Heart right ventricle (tissue), 16 donors: ENCODE measurements at regions of chr14 and their contacts with region 1.

Region 1: DNA sequence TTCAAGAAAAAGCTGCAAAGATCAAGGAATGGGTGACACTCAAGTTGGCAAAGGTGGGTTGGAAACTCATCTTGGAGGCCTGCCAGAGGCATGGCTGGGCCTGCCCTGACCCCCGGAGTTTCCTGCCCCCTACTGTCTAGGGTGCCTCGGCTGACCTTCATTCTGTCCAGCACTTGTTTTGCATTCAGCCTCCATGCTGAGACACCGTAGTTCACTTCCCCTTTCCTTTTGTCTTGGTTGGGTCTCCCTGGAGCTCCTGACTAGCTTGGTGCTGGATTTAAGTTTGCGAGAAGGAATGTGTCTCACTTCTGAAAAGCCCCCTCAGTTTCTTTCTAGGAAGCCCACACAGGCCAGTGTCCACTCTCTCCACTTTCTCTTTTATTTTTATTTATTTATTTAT is 26.5 kb downstream of the PLEKHH1 start:
- DNase-seq: no peak
- ATAC-seq: no peak
- H3K4me3 ChIP-seq: no peak overlapping the region
- H3K27ac ChIP-seq: no peak overlapping the region
- H3K4me1 ChIP-seq: no peaks in the 10 kb centered on the region
- H3K27me3 ChIP-seq: no peaks in the 10 kb centered on the region
- CTCF ChIP-seq: no peak

Region 2: GRCh38 chr14:67435615-67436346 is 123.9 kb before region 1 on chr14:
- intact Hi-C with region 1: loop called in 1 of 10 experiments (anchors 5 kb)
- DNase-seq: no peak
- ATAC-seq: peak in 1 of 8 donors; percentile 47
- H3K4me3 ChIP-seq: no peak overlapping the region
- H3K27ac ChIP-seq: no peak overlapping the region
- H3K4me1 ChIP-seq: peaks cover 0 to 5% (median 0%) of the 10 kb centered on the region in 9 donors
- H3K27me3 ChIP-seq: peaks cover 0 to 4% (median 3%) of the 10 kb centered on the region in 7 donors
- CTCF ChIP-seq: no peak

Region 3: GRCh38 chr14:67963960-67964744 is 404.5 kb after region 1 on chr14:
- intact Hi-C with region 1: no loop called
- DNase-seq: no peak
- ATAC-seq: peak in 2 of 8 donors; percentile 39 to 58
- H3K4me3 ChIP-seq: peak overlapping the region in 5 of 10 donors; percentile 3 to 28 (median 15)
- H3K27ac ChIP-seq: peak overlapping the region in 2 of 10 donors; percentile 4 to 17
- H3K4me1 ChIP-seq: peaks cover 0 to 42% (median 0%) of the 10 kb centered on the region in 9 donors
- H3K27me3 ChIP-seq: no peaks in the 10 kb centered on the region
- CTCF ChIP-seq: no peak